ENCODE measurements at regions of chr15 and their contacts with region 1.

Region 1: DNA sequence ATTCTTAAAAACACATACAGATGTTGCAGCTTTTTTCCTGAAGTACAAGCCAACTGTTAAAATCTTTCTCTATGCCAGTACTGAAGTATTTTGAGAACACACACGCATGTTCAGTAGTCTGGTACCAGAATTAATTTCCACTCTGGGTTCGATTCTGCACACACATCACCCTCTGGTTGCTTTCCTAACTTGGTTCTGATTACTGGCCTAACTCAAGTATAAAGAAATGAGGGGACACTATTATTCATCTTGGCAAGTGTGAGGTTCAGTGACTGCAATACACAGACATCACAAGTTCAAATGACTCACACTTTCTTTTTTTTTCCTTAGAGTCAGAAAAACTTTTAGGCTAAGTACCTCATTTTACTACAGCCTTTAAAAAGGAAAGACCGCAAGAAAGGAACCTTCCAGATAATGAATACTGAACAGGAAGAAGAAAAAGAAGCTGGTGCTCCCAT is 37.4 kb upstream of the LDHAL6B start:
- DNase-seq: no peak
- ATAC-seq: peak; percentile 88
- H3K4me3 ChIP-seq: no peak overlapping the region
- H3K27ac ChIP-seq: peak overlapping the region; percentile 20 to 80
- H3K4me1 ChIP-seq: peaks cover 6 to 11% of the 10 kb centered on the region in 2 donors
- H3K27me3 ChIP-seq: no peaks in the 10 kb centered on the region

Region 2: GRCh38 chr15:59124261-59124660 is 45.0 kb before region 1 on chr15:
- intact Hi-C with region 1: no loop called
- DNase-seq: no peak
- ATAC-seq: no peak
- H3K4me3 ChIP-seq: no peak overlapping the region
- H3K27ac ChIP-seq: no peak overlapping the region
- H3K4me1 ChIP-seq: no peaks in the 10 kb centered on the region
- H3K27me3 ChIP-seq: no peaks in the 10 kb centered on the region

Region 3: GRCh38 chr15:59221511-59222505 is 52.5 kb after region 1 on chr15:
- intact Hi-C with region 1: loop called in 1 of 2 experiments (anchors 5 kb)
- DNase-seq: no peak
- ATAC-seq: no peak
- H3K4me3 ChIP-seq: no peak overlapping the region
- H3K27ac ChIP-seq: peak overlapping the region in 1 of 2 donors; percentile 17
- H3K4me1 ChIP-seq: peaks cover 2 to 3% of the 10 kb centered on the region in 2 donors
- H3K27me3 ChIP-seq: no peaks in the 10 kb centered on the region

Region 4: GRCh38 chr15:59237119-59237855 is 68.0 kb after region 1 on chr15:
- intact Hi-C with region 1: loop called in 1 of 2 experiments (anchors 5 kb)
- DNase-seq: no peak
- ATAC-seq: no peak
- H3K4me3 ChIP-seq: no peak overlapping the region
- H3K27ac ChIP-seq: no peak overlapping the region
- H3K4me1 ChIP-seq: peaks cover 2 to 4% of the 10 kb centered on the region in 2 donors
- H3K27me3 ChIP-seq: no peaks in the 10 kb centered on the region